Vagina (tissue), 2 donors: ENCODE measurements at regions of chr3 and their contacts with region 1.

Region 1: DNA sequence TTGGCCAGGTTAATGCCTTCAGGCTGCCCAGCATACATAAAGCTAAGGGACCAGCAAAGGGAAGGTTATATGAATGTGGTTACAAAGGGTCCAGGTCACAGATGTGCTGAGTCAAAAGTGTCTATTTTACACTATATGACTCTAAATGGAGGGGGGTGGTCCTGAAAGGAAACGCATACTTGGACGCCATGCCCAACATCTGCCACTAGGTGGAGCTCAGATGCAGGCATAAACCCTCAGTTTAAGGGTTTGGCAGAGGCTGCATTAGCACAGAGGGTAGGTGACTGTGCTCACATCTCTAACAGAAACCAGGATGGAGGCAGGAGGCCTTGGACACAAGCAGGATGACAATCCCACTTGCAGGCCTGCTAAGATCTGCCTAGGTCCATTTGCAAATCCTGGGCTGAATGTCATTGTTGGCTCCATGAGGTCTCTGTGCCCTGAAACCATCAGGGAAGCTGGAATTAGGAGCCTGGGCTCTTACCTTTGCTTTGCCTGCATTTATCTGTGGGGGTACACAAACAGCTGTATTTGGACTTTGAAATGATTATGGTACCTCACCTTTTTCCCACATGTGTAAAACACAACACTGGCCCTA is 55.8 kb downstream of the ZNF621 start:
- DNase-seq: no peak
- H3K4me3 ChIP-seq: no peak overlapping the region
- H3K27ac ChIP-seq: no peak overlapping the region
- H3K4me1 ChIP-seq: peaks cover 12% of the 10 kb centered on the region
- H3K27me3 ChIP-seq: no peaks in the 10 kb centered on the region
- CTCF ChIP-seq: peak; percentile 77 to 92 (median 87)
- POLR2A ChIP-seq: no peak

Region 2: DNA sequence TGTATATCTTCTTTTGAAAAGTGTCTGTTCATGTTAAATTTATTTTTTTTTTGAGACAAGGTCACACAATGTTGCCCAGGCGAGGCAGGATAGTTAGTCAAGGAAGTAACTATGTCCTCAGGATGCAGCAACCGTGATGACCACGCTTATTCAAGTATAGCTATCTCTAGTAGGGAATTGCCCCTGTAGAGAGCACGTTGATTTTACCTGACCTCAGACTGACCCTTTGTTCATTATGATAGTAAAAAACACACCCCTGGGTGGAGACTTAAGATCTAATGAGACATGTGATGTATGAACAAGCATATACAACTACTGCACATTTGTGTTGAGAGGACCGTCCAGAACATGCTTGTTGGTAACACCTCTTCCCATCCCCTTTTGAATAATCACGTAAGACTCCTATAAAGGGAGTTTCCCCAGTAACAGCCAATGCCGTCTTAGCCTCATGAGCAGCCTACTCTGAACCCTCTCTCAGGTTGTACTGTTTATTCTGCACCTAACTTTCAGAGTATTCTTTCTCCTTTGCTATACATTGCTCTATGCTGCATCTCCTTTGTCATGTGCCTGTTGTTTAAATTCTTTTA is 22.9 kb before region 1 on chr3:
- intact Hi-C with region 1: no loop called
- DNase-seq: no peak
- H3K4me3 ChIP-seq: no peak overlapping the region
- H3K27ac ChIP-seq: no peak overlapping the region
- H3K4me1 ChIP-seq: no peaks in the 10 kb centered on the region
- H3K27me3 ChIP-seq: no peaks in the 10 kb centered on the region
- CTCF ChIP-seq: no peak
- POLR2A ChIP-seq: no peak

Region 3: DNA sequence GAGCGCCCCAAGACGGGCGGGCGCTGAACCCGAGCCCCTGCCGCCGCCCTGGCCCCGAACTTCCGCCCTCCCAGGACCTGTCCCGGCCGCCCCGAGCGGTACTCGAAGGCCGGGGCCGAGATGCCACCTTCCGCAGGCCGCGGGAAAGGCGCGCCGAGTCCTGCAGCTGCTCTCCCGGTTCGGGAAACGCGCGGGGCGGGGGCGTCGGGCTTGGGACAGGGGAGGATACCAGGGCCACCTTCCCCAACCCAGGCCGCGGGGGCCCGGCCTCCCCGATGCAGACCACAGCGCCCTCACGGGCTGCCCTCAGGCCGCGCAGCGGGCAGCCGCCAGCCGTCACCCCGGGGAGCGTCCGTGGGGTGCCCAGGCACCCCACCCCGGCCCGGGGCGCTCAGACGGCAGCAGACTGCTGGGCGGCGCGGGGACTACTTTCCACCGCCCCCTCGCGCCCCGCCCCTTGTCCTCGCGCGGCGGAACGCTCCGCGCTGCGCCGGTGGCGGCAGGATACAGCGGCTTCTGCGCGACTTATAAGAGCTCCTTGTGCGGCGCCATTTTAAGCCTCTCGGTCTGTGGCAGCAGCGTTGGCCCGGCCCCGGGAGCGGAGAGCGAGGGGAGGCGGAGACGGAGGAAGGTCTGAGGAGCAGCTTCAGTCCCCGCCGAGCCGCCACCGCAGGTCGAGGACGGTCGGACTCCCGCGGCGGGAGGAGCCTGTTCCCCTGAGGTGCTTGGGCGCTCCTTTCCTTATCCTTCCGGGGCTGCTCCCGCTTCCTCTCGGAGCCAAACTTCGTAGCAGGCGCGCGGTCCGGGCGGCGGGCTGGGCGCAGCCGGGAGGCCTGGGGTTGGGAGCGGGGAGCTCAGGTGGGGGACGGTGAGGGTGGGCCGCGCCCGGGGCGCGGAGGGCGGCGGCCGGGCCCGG is 618.6 kb after region 1 on chr3 and contains the start of gene CTNNB1:
- intact Hi-C with region 1: loop called (anchors 10 kb)
- DNase-seq: no peak
- H3K4me3 ChIP-seq: peak within 1 kb of the TSS; percentile 73 to 79
- H3K27ac ChIP-seq: peak within 1 kb of the TSS; percentile 98
- H3K4me1 ChIP-seq: peaks cover 36% of the 10 kb centered on the region
- H3K27me3 ChIP-seq: no peaks in the 10 kb centered on the region
- CTCF ChIP-seq: no peak
- POLR2A ChIP-seq: peak in 1 of 2 donors; percentile 94
- total RNA-seq, gene CTNNB1: 505 TPM

Region 4: DNA sequence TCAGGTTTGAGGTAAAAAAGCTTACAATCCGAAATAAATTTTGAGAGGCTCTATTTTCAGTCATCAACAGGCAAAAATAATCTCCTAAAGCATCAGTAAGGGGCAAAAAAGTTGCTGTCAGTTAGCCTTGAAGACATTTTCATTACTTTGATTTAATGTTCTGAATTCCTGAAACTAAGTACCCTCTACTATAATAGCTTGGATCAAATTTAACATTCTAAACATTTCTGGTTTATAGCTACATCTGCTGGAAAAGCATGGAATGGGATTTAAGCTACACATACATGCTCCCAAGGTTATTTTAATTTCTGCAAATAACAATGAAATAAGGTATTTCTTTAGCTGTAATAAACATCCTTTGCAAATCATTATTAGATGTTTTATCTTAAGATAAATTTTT is 1135.9 kb after region 1 on chr3:
- intact Hi-C with region 1: loop called (anchors 10 kb)
- DNase-seq: no peak
- H3K4me3 ChIP-seq: no peak overlapping the region
- H3K27ac ChIP-seq: no peak overlapping the region
- H3K4me1 ChIP-seq: no peaks in the 10 kb centered on the region
- H3K27me3 ChIP-seq: no peaks in the 10 kb centered on the region
- CTCF ChIP-seq: peak in 2 of 3 experiments; percentile 29 to 35
- POLR2A ChIP-seq: no peak

Region 5: GRCh38 chr3:41881233-41881821 is 1300.7 kb after region 1 on chr3:
- intact Hi-C with region 1: loop called (anchors 5 kb)
- DNase-seq: no peak
- H3K4me3 ChIP-seq: no peak overlapping the region
- H3K27ac ChIP-seq: no peak overlapping the region
- H3K4me1 ChIP-seq: no peaks in the 10 kb centered on the region
- H3K27me3 ChIP-seq: no peaks in the 10 kb centered on the region
- CTCF ChIP-seq: peak; percentile 39 to 77 (median 59)
- POLR2A ChIP-seq: no peak